HEK293 (cell line): ENCODE measurements at regions of chr10 and their contacts with region 1.

Region 1: DNA sequence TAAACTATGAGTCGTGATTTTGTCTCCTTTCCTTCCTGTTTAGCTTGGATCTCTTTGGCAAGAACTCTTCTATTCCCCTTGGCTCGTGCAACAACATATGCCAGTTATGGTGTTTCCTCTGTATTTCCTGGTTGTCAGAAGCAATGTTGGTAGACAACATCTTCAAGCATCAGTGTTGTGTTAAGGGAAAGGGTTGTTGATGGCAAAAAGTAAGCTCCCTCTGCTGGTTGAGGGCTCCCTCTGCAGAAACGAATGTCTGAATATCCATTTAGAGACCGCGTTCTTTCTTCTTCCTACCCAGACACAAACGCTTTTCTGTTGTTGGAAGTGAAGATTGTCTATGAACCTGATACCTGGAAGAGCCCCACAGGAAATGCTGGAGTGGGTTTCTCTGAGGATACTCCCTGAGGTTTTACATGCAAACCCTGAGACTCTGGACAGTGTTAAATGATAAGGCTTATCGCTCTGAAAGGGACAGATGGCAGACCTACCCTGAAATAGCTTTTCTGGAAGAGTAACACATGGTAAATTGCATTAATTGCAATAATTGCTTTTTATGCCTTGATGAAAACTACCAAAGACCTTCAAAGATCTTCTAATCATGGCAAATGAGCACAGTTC is 23.5 kb upstream of the C1QL3 start:
- H3K4me3 ChIP-seq: no peak overlapping the region
- H3K27ac ChIP-seq: no peak overlapping the region
- H3K4me1 ChIP-seq: no peaks in the 10 kb centered on the region
- CTCF ChIP-seq: peak; percentile 43; the same call in 1 of the 2 replicates

Region 2: GRCh38 chr10:15859906-15860691 is 685.1 kb before region 1 on chr10 and contains the start of gene MINDY3:
- CTCF ChIA-PET with region 1: no interaction called
- POLR2A ChIA-PET with region 1: interaction called, 10 read pairs
- H3K4me3 ChIP-seq: peak within 1 kb of the TSS; percentile 71
- H3K27ac ChIP-seq: peak within 1 kb of the TSS; percentile 91
- H3K4me1 ChIP-seq: peaks cover 23% of the 10 kb centered on the region
- CTCF ChIP-seq: peak; percentile 23; the same call in 1 of the 2 replicates

Region 3: DNA sequence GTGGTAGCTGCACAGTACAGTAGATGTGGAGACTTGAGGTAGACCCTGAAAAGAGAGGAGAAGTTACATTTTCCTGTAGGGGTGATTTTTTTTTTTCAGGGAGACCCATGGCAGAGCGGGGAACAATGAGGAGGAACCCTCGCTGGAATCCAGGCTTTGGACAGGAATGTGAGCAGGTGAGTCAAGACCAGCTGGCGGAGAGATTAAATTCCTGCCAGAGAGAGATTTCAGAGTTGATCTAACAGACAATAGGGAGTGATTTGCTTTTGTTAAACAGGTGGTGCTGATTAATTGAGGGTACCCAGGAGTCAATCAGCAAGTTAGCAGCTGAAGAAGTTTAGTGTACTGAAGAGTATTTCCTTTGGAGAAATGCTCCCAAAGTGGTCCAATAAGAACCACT is 643.3 kb before region 1 on chr10:
- CTCF ChIA-PET with region 1: interaction called, 13 read pairs
- POLR2A ChIA-PET with region 1: no interaction called
- H3K4me3 ChIP-seq: no peak overlapping the region
- H3K27ac ChIP-seq: no peak overlapping the region
- H3K4me1 ChIP-seq: no peaks in the 10 kb centered on the region
- CTCF ChIP-seq: no peak

Region 4: DNA sequence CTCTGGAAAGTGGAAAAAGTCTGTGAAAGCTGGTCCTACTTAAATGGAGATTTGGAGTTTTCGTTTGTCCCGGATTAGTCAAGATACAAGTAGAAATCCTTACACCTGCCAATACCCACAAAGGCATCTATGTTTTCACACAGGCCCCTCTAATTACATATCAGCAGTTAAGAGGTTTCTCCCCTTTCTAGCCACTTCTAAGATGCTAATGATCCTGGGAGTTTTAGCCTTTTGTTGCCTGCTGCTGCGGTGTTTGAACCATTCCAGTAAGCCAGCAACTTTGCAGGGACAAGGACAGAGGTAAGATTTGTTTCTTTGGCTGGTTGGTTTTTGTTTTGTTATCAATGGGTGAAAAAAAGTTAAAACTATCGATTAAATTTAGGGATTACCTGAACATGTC is 17.8 kb before region 1 on chr10:
- CTCF ChIA-PET with region 1: interaction called, 10 read pairs
- POLR2A ChIA-PET with region 1: interaction called, 6 read pairs
- H3K4me3 ChIP-seq: no peak overlapping the region
- H3K27ac ChIP-seq: no peak overlapping the region
- H3K4me1 ChIP-seq: no peaks in the 10 kb centered on the region
- CTCF ChIP-seq: no peak

Region 5: DNA sequence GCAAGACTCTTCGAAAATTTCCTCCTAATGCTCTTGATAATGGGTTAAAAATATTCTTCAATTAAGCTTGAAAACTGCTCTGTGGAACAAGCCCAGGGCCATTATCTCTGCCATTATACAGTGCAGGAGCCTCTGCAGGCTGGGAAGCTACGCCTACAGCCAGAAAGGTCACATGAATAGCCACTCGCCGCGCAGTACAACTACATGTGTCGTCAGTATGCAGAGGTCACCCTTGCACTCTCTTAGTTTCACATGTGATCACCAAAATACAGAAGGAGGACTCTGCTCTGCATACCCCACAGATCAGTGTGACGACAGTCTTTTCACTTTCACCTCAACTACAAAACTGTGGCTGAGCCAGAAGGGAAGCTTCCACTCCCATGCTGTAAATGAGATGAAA is 118.2 kb after region 1 on chr10:
- CTCF ChIA-PET with region 1: no interaction called
- POLR2A ChIA-PET with region 1: no interaction called
- H3K4me3 ChIP-seq: no peak overlapping the region
- H3K27ac ChIP-seq: no peak overlapping the region
- H3K4me1 ChIP-seq: no peaks in the 10 kb centered on the region
- CTCF ChIP-seq: no peak

Region 6: DNA sequence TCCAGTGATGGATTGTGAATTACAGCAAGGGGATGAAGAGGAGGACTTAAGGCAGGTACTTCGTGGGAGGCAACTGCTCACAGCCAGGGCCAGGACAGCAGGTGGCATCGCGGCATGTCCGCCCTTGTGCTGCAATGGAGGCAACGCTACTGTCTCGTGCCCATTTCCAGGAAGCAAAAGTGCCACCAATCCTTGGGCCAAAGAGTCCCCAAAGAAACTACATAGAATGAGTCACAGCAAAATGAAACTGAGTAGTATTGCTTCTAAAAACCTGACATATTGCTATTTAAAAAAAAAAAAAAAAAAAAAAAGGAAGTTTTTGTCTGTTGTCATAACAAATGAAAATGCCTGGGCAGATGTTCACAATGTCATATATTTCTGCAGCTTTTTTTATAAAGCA is 225.4 kb after region 1 on chr10:
- CTCF ChIA-PET with region 1: no interaction called
- POLR2A ChIA-PET with region 1: no interaction called
- H3K4me3 ChIP-seq: no peak overlapping the region
- H3K27ac ChIP-seq: no peak overlapping the region
- H3K4me1 ChIP-seq: no peaks in the 10 kb centered on the region
- CTCF ChIP-seq: no peak